ENCODE measurements at regions of chr6 and their contacts with region 1.

Region 1: DNA sequence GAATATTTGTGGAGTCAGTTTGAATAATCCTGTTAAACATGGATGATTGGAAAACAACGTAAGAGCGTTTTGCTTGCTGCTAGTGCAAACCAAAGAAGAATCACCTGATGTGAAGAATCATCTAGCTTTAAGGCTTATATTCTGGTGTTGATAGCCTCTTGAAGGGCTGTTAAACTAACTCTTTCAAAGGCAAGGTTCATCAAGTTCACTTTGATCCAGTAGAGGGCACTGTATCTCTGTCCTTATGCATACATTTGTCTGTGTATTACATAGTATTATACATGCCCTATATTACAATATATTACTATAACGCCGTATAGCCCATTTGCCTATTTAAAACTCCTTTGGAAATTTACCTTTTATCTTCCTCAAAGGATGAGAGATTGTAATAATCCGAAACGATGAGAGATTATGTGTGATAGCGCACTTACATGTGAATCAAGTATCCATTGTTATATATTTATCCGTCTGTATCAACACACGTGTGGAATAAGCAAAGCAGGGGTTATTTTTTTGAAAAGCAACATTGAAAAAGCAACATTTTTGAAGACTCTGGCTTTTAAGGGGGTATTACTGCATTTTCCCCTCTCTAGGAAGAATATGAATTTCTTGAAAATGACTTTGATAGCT is 50.8 kb upstream of the NRN1 start:
- DNase-seq: peak; percentile 41
- ATAC-seq: peak; percentile 91
- H3K4me3 ChIP-seq: no peak overlapping the region
- H3K27ac ChIP-seq: no peak overlapping the region
- H3K4me1 ChIP-seq: no peaks in the 10 kb centered on the region
- H3K27me3 ChIP-seq: peaks cover 9% of the 10 kb centered on the region
- CTCF ChIP-seq: peak; percentile 68; the same call in 1 of the 2 replicates

Region 2: GRCh38 chr6:5778317-5778857 is 279.2 kb before region 1 on chr6:
- CTCF ChIA-PET with region 1: no interaction called
- POLR2A ChIA-PET with region 1: no interaction called
- in situ Hi-C with region 1: no loop called
- intact Hi-C with region 1: no loop called
- DNase-seq: no peak
- ATAC-seq: no peak
- H3K4me3 ChIP-seq: no peak overlapping the region
- H3K27ac ChIP-seq: no peak overlapping the region
- H3K4me1 ChIP-seq: no peaks in the 10 kb centered on the region
- H3K27me3 ChIP-seq: no peaks in the 10 kb centered on the region
- CTCF ChIP-seq: no peak

Region 3: DNA sequence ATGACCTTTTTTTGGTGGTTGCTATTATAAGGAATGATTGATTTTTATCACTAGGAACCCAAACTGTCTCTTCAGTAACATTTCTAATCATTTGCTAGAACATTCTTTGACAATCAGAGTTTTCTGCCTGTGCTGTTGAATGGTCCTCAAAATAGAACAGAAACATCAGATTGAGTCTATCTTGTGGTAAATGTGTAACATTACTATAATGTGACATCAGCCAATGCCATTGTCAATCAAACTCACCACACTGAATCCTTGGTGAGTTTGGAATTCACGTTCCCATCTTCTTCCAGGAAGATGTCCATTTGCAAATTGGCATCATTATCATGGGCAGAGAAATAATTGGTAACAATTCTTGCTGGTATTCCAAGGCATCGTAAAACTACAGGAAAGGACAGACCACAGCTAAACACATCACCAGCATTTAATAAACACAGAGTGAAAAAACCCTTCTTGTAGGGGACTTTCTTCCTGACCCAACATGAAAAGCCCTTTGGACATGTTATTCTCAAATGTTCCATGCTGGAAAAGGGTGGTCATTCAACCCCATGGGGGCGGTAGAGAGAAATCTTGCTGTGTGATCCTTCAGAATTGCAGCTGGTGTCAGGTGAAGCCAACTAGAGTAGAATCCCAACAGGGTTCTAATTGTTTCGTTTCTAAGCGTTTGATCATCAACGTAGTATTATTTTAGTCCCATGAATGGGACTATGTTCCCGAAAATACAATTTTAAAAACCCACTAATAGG is 164.4 kb after region 1 on chr6:
- CTCF ChIA-PET with region 1: no interaction called
- POLR2A ChIA-PET with region 1: no interaction called
- in situ Hi-C with region 1: no loop called
- intact Hi-C with region 1: loop called (anchors 10 kb)
- DNase-seq: no peak
- ATAC-seq: no peak
- H3K4me3 ChIP-seq: no peak overlapping the region
- H3K27ac ChIP-seq: no peak overlapping the region
- H3K4me1 ChIP-seq: no peaks in the 10 kb centered on the region
- H3K27me3 ChIP-seq: no peaks in the 10 kb centered on the region; the same call in 1 of the 2 replicates
- CTCF ChIP-seq: peak; percentile 28

Region 4: DNA sequence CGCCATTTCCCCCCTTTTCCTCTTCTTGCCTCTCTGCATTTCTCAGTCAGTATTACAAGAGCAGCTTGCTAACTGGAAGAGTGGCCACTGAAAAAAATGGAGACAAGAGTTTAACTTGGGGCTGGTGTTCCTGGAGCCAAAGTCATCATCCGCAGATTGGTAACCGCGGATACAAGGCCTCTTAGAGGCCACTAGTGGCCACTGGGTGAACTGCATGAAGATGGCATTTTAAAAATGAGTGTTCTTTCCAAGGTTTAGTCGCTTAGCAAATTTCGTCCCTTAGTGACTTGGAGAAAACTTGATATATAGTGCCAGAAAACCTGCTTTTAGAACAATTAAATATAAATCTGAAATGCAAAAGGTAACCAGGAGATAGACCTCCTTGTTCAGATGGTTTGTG is 258.1 kb after region 1 on chr6:
- CTCF ChIA-PET with region 1: no interaction called
- POLR2A ChIA-PET with region 1: no interaction called
- in situ Hi-C with region 1: no loop called
- intact Hi-C with region 1: loop called (anchors 10 kb)
- DNase-seq: peak; percentile 45
- ATAC-seq: peak; percentile 48; the same call in 1 of the 2 replicates
- H3K4me3 ChIP-seq: no peak overlapping the region
- H3K27ac ChIP-seq: no peak overlapping the region
- H3K4me1 ChIP-seq: no peaks in the 10 kb centered on the region; the same call in 1 of the 2 replicates
- H3K27me3 ChIP-seq: peaks cover 6% of the 10 kb centered on the region; the same call in 1 of the 2 replicates
- CTCF ChIP-seq: peak; percentile 85

Region 5: DNA sequence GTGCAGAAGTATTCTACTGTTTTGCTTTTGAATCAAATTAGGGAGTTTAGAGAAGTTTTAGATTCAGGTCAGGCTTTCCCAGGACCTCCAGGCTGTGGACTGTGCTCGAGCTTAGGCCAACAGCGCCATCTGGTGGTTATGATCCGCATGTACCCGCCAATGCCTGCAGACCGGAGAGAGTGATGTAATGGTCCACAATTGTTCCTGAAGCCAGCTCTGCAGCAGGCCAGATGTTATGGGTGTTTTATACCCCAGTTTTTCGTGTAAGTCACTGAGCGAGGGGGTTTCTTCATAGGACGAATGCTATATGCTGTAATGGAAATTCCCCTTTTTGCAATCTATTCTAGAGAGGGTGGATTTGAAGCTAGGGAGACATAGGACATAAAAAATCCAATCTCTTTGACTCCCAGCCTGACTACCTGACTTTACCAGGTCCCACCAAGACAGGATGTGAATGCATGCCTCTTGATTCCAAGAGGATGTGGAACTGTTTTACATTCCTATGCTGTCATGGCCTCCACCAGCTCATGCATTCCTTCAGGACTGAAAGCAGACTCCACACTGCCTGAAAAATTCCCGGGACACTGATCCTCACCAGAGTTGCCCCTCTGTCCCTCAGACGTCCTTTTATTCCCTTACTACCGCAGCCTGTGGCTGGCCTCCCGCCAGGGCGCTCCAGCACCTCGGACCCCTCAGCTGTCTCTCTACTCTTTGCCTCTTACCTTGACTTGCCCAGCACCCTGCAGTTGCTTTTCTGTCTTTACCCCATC is 489.8 kb after region 1 on chr6:
- CTCF ChIA-PET with region 1: interaction called, 7 read pairs
- POLR2A ChIA-PET with region 1: no interaction called
- in situ Hi-C with region 1: no loop called
- intact Hi-C with region 1: loop called (anchors 1 kb)
- DNase-seq: peak; percentile 55
- ATAC-seq: peak; percentile 99
- H3K4me3 ChIP-seq: peak overlapping the region; percentile 6 to 38
- H3K27ac ChIP-seq: no peak overlapping the region
- H3K4me1 ChIP-seq: no peaks in the 10 kb centered on the region
- H3K27me3 ChIP-seq: peaks cover 11% of the 10 kb centered on the region
- CTCF ChIP-seq: peak; percentile 90